ENCODE measurements at regions of chr11 and their contacts with region 1.

Region 1: DNA sequence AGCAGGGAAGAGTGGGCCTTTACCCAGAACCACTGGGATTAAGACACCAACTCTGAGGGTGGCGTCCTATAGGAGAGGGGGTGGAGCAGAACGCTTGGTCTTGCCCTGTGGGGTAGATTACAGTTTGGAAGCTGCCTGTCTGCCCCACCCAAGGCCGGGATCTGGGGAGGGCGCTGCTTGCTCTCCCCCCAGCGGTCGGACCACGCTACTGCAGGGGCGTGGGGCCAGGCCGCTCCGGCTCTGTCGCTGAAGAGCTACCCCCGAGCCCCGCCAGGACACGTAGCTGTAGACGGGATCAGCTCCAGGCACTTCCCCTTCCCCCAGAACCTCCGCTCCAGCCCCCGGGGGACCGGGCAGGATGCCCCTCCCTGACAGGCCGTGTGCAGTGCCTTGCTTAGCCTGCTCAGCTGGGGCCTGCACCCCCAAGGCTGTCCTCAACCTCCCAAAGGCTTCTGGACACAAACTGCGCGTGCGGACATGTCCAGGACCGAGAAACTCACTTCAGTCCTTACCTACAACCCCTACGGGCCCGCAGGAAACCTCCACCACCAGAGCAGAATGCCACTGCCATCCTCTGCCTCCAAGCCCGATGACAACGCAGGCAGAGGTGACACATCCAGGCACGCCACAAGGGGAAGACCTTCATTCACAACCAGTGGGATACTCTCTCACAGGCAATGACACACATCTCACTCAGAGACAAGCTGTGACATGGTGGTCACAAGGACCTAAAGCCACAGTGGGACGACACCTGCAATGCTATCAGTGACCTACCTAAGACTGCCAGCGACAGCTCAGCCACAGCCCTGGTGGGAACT is 3.6 kb downstream of the AHNAK start:
- DNase-seq: peak; percentile 58 to 89 (median 66)
- ATAC-seq: peak; percentile 56
- H3K4me3 ChIP-seq: peak overlapping the region; percentile 97
- H3K4me3 Mint-ChIP-seq: peak overlapping the region; percentile 99
- H3K27ac ChIP-seq: peak overlapping the region; percentile 77 to 84
- H3K27ac Mint-ChIP-seq: peak overlapping the region; percentile 90
- H3K4me1 ChIP-seq: peaks cover 89% of the 10 kb centered on the region
- H3K4me1 Mint-ChIP-seq: peaks cover 77% of the 10 kb centered on the region
- H3K27me3 ChIP-seq: no peaks in the 10 kb centered on the region
- H3K27me3 Mint-ChIP-seq: no peaks in the 10 kb centered on the region
- CTCF ChIP-seq: peak; percentile 99

Region 2: DNA sequence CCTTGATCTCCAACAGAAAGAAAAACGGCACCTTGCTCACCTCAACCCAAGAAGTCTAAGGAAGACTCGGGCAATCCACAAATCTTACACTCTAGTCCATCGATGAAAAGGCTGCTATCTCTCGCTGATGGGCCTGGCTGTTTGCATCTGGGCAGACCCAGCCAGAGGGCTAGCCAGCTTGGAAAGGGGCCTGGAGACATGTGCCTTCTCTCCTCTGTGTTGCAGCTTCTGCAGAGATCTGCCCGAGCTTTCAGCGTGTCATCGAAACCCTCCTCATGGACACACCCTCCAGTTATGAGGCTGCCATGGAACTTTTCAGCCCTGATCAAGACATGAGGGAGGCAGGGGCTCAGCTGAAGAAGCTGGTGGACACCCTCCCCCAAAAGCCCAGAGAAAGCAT is 121.0 kb before region 1 on chr11:
- CTCF ChIA-PET with region 1: interaction called, 35 read pairs
- POLR2A ChIA-PET with region 1: interaction called, 15 read pairs
- intact Hi-C with region 1: loop called (anchors 2 to 5 kb)
- DNase-seq: no peak
- ATAC-seq: no peak
- H3K4me3 ChIP-seq: no peak overlapping the region
- H3K4me3 Mint-ChIP-seq: no peak overlapping the region
- H3K27ac ChIP-seq: no peak overlapping the region
- H3K27ac Mint-ChIP-seq: no peak overlapping the region
- H3K4me1 ChIP-seq: peaks cover 17% of the 10 kb centered on the region
- H3K4me1 Mint-ChIP-seq: peaks cover 15% of the 10 kb centered on the region
- H3K27me3 ChIP-seq: no peaks in the 10 kb centered on the region
- H3K27me3 Mint-ChIP-seq: no peaks in the 10 kb centered on the region
- CTCF ChIP-seq: no peak

Region 3: GRCh38 chr11:62497132-62497915 is 45.6 kb before region 1 on chr11:
- CTCF ChIA-PET with region 1: interaction called, 3 read pairs
- POLR2A ChIA-PET with region 1: no interaction called
- intact Hi-C with region 1: loop called in 1 of 2 experiments (anchors 5 kb)
- DNase-seq: peak in 4 of 14 experiments; percentile 31 to 56 (median 48)
- ATAC-seq: peak; percentile 59
- H3K4me3 ChIP-seq: no peak overlapping the region
- H3K4me3 Mint-ChIP-seq: no peak overlapping the region
- H3K27ac ChIP-seq: no peak overlapping the region
- H3K27ac Mint-ChIP-seq: no peak overlapping the region
- H3K4me1 ChIP-seq: peaks cover 3% of the 10 kb centered on the region
- H3K4me1 Mint-ChIP-seq: no peaks in the 10 kb centered on the region
- H3K27me3 ChIP-seq: no peaks in the 10 kb centered on the region
- H3K27me3 Mint-ChIP-seq: peaks cover 2% of the 10 kb centered on the region
- CTCF ChIP-seq: peak; percentile 26

Region 4: GRCh38 chr11:62532096-62532495 is 10.9 kb before region 1 on chr11:
- CTCF ChIA-PET with region 1: interaction called, 3 read pairs
- POLR2A ChIA-PET with region 1: no interaction called
- intact Hi-C with region 1: loop called in 1 of 2 experiments (anchors 1 kb)
- DNase-seq: no peak
- ATAC-seq: no peak
- H3K4me3 ChIP-seq: no peak overlapping the region
- H3K4me3 Mint-ChIP-seq: no peak overlapping the region
- H3K27ac ChIP-seq: no peak overlapping the region
- H3K27ac Mint-ChIP-seq: peak overlapping the region; percentile 49
- H3K4me1 ChIP-seq: peaks cover 12% of the 10 kb centered on the region
- H3K4me1 Mint-ChIP-seq: peaks cover 6% of the 10 kb centered on the region
- H3K27me3 ChIP-seq: no peaks in the 10 kb centered on the region
- H3K27me3 Mint-ChIP-seq: no peaks in the 10 kb centered on the region
- CTCF ChIP-seq: no peak

Region 5: DNA sequence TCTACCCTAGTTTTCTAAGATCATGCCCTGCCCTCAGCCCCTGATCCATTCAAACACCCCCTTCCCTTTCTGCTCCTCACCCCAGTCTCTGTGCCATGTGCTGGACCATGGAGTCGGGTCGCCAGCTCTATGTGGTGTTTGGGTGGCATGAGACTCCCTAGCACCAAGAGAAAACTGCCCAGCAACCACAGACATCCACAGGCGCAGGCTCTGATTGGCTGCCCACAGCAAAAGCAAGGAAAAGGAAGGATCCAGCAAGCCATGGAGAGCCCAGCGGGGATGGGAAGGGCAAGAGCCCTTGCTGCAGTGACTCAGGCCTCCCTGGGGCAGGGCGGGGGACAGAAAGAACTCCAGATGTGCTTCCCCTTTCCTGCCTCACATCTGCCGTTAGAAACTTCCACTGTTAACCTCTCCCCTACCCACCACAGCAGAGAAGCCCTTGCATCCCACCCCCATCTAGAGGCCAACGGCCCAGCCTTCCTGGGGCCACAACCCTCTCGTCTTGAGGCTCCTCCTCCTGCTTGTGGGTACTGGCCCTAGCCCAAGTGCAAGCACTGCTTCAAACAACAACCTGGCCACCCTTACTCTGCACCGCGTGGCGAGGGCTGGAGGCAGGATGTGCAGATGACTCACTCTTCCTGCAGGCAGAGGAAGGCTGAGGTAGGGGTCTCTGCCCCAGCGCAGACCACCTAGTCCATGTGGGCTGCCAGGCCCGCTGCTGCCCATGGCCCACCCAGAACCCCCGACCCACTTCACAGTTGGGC is 13.3 kb after region 1 on chr11:
- CTCF ChIA-PET with region 1: interaction called, 251 read pairs
- POLR2A ChIA-PET with region 1: interaction called, 122 read pairs
- intact Hi-C with region 1: loop called (anchors 1 kb)
- DNase-seq: peak; percentile 72 to 94 (median 83)
- ATAC-seq: peak; percentile 46
- H3K4me3 ChIP-seq: peak overlapping the region; percentile 49
- H3K4me3 Mint-ChIP-seq: peak overlapping the region; percentile 84
- H3K27ac ChIP-seq: peak overlapping the region; percentile 96 to 97
- H3K27ac Mint-ChIP-seq: peak overlapping the region; percentile 95
- H3K4me1 ChIP-seq: peaks cover 95% of the 10 kb centered on the region
- H3K4me1 Mint-ChIP-seq: peaks cover 84% of the 10 kb centered on the region
- H3K27me3 ChIP-seq: no peaks in the 10 kb centered on the region
- H3K27me3 Mint-ChIP-seq: no peaks in the 10 kb centered on the region
- CTCF ChIP-seq: no peak

Region 6: GRCh38 chr11:62567018-62567633 is 24.2 kb after region 1 on chr11:
- CTCF ChIA-PET with region 1: interaction called, 11 read pairs
- POLR2A ChIA-PET with region 1: interaction called, 3 read pairs
- intact Hi-C with region 1: no loop called
- DNase-seq: no peak
- ATAC-seq: no peak
- H3K4me3 ChIP-seq: no peak overlapping the region
- H3K4me3 Mint-ChIP-seq: no peak overlapping the region
- H3K27ac ChIP-seq: no peak overlapping the region
- H3K27ac Mint-ChIP-seq: no peak overlapping the region
- H3K4me1 ChIP-seq: peaks cover 29% of the 10 kb centered on the region
- H3K4me1 Mint-ChIP-seq: peaks cover 40% of the 10 kb centered on the region
- H3K27me3 ChIP-seq: no peaks in the 10 kb centered on the region
- H3K27me3 Mint-ChIP-seq: no peaks in the 10 kb centered on the region
- CTCF ChIP-seq: no peak